Adrenal gland (tissue), 19 donors: ENCODE measurements at regions of chr10 and their contacts with region 1.

Region 1: DNA sequence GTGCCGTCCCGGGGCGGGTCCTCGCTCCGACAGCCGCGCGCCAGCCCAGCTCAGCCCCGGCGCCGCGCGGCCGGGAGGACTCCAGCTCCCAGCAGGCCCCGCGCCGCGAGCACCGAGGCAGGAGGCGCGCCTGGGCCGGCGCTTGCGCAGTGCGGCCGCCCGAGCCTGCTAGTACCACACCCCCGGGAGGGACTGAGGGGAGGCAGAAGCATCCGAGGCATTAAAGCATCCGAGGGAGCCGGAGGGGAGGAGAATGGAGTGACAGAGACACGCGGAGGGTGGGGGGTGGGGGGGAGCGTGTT is at the start of gene GRK5:
- DNase-seq: peak; percentile 93 to 97 (median 95)
- H3K4me3 ChIP-seq: peak within 1 kb of the TSS; percentile 43 to 99 (median 68)
- H3K27ac ChIP-seq: peak within 1 kb of the TSS; percentile 22 to 99 (median 96)
- H3K4me1 ChIP-seq: peaks cover 16 to 48% of the 10 kb centered on the region in 2 donors
- H3K27me3 ChIP-seq: no peaks in the 10 kb centered on the region
- CTCF ChIP-seq: no peak
- POLR2A ChIP-seq: peak; percentile 56 to 79
- total RNA-seq, gene GRK5: 13.8 to 96.4 (median 22.5) TPM

Region 2: DNA sequence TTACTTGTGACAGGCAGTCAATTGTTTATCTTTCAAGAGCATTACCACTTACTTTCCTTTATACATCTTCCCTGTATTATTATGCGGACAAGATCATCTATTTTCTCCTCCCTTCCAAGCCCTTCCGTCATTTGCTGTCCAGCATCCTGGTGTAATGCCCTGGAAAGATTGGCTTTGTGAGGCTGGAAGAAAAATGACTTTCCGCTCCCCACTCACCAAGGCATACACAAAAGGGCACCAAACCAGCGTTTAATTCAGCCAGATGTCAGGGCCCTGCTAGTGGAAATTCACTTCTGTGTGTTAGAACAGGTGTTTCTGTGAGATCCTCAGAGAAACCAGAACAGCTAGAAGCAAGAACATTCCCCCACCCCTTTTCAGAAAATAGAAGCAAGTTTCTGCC is 305.9 kb before region 1 on chr10:
- intact Hi-C with region 1: no loop called
- DNase-seq: no peak
- H3K4me3 ChIP-seq: no peak overlapping the region
- H3K27ac ChIP-seq: no peak overlapping the region
- H3K4me1 ChIP-seq: no peaks in the 10 kb centered on the region
- H3K27me3 ChIP-seq: no peaks in the 10 kb centered on the region
- CTCF ChIP-seq: no peak
- POLR2A ChIP-seq: no peak

Region 3: GRCh38 chr10:119270762-119271366 is 63.5 kb after region 1 on chr10:
- intact Hi-C with region 1: loop called in 1 of 2 experiments (anchors 5 kb)
- DNase-seq: peak; percentile 56 to 84 (median 78)
- H3K4me3 ChIP-seq: no peak overlapping the region
- H3K27ac ChIP-seq: peak overlapping the region; percentile 39 to 88 (median 79)
- H3K4me1 ChIP-seq: peaks cover 19 to 37% of the 10 kb centered on the region in 2 donors
- H3K27me3 ChIP-seq: no peaks in the 10 kb centered on the region
- CTCF ChIP-seq: no peak
- POLR2A ChIP-seq: peak in 1 of 2 donors; percentile 25

Region 4: DNA sequence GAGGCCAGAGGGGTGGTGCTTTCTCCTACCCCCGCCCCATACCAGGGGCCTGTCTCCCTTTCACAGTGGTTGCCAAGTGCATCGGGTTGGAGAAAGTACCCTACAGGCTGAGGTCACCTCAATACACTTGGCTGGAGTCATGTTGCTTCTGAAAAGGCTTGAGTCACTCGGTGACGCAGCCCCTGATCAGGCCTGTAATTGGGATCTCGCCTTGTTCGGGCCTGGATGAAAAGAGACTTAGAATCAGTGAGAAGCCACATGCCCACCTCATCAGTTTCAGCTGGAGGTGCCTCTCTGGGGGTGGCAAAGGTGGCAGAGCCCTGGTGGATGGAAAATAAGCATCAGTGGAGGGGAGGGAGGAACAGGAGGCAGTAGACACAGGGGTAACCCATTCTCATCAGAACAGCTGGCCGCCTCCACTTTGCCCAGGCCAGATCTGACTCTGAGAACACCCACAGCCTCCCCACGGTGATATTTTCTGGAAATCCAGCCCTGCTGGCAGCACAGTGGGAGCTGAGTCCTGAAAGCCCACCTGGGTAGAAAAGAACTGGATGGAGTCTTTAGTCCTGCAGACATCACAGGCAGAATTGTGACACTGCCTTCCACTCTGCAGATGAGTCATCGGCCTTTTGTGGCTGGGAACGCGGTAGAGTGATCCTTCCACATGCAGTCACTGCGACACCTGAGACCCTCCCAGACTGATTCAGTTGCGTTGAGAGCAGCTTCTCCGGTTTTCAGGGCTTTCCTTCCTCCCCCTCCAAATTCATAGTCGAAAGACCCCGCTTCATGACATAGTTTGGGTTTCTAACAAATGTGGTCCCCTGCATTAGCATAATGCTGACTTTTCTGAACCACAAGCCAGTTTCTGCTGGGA is 108.0 kb after region 1 on chr10:
- intact Hi-C with region 1: no loop called
- DNase-seq: peak; percentile 64 to 93 (median 87)
- H3K4me3 ChIP-seq: no peak overlapping the region
- H3K27ac ChIP-seq: peak overlapping the region; percentile 29 to 95 (median 77)
- H3K4me1 ChIP-seq: peaks cover 17 to 32% of the 10 kb centered on the region in 2 donors
- H3K27me3 ChIP-seq: no peaks in the 10 kb centered on the region
- CTCF ChIP-seq: no peak
- POLR2A ChIP-seq: no peak

Region 5: GRCh38 chr10:119416855-119417254 is 209.5 kb after region 1 on chr10:
- intact Hi-C with region 1: loop called (anchors 2 to 5 kb)
- DNase-seq: peak; percentile 55 to 86 (median 67)
- H3K4me3 ChIP-seq: no peak overlapping the region
- H3K27ac ChIP-seq: no peak overlapping the region
- H3K4me1 ChIP-seq: peaks cover 22 to 32% of the 10 kb centered on the region in 2 donors
- H3K27me3 ChIP-seq: no peaks in the 10 kb centered on the region
- CTCF ChIP-seq: peak; percentile 43 to 83 (median 72)
- POLR2A ChIP-seq: no peak

Region 6: DNA sequence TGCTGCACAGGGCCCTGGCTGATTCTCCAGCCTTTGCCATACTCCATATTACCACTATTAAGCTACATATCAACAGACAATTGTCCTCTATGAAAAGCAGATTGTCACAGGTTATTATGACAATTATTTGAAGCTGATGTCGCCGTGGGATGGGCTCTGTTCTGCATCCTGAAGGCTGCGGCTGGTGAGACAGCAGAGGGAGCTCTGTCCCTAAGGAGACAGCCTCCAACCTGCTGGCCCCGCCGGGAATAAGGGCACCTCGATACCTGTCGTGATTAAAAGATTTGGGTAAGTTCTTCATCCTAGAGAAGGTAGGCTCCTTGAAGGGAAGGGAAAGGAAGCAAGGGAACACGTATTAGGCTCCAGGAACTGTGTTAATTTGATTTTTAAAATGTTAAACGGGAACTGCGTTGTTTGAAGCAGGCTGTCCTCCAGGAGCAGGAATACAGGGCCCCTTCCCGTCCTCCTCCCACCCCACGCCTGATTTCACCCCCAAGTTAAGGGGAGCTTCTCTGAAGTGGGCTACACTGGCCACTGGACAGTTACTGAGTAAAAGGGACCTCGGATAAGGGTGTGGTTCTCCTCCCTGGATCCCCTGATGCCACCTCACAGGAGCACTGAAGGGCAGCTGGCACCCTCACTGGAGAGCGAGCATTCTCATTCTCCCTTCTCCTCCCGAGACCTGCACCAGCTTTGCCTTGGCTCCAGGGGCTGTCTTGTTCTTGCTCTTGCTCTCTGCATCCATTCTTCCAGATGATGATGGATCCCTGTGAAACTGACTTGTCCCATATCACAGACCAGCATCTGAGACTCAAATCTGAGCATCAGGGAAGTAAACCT is 401.2 kb after region 1 on chr10:
- intact Hi-C with region 1: loop called in 1 of 2 experiments (anchors 10 kb)
- DNase-seq: peak; percentile 44 to 85 (median 65)
- H3K4me3 ChIP-seq: no peak overlapping the region
- H3K27ac ChIP-seq: no peak overlapping the region
- H3K4me1 ChIP-seq: peaks cover 0 to 8% of the 10 kb centered on the region in 2 donors
- H3K27me3 ChIP-seq: no peaks in the 10 kb centered on the region
- CTCF ChIP-seq: peak; percentile 38 to 72 (median 58)
- POLR2A ChIP-seq: no peak